Activated T-helper 2 cell treated with anti-CD3 and anti-CD28 coated beads, Interferon-gamma antibody, Interleukin-2, Interleukin-4, amounts not matched to agents 10 μg/mL and 5 μg/mL and 100 μg/mL, durations not matched to agents 14 hours and 24 hours and 36 hours (primary cell): ENCODE measurements at regions of chr10 and their contacts with region 1.

Region 1: DNA sequence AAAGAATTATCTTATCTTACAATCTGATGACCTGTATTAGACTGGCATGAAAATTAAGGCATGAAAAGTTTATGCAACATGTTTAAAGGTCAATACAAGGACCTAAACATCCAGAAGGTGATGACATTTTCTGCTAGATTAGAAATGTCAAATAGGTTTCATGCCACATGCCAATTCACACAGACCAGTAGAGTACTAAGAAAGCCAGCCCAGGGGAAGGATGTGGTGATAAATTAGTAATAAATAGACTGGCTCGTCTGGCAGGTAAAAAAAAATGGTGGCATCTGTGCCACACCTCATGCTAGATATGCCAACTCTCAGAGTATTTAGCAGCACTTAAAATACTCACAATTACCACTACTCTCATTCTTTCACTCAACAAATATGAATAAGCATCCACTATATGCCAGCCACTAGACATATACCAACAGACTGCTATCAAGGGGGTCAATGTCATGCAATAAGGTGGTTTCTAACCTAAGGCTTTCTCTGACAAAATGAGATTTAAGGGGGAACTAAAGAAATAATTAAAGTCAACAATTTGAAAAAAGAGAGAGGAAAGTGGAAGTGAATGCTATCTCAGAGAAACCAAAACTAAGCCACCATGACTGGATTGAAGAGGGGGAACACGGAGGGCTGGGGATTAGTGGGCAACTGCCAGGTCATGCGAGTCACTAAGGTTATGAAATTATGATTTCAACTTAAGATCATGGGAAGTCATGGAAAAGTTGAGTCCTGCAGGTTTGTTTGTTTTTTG is 83.5 kb downstream of the SGMS1 start:
- DNase-seq: no peak
- H3K4me3 Mint-ChIP-seq: peak overlapping the region; percentile 9
- H3K27ac Mint-ChIP-seq: peak overlapping the region; percentile 83
- H3K4me1 Mint-ChIP-seq: peaks cover 72% of the 10 kb centered on the region
- H3K27me3 Mint-ChIP-seq: no peaks in the 10 kb centered on the region

Region 2: GRCh38 chr10:50431791-50432190 is 108.5 kb before region 1 on chr10:
- intact Hi-C with region 1: loop called (anchors 1 kb)
- DNase-seq: no peak
- H3K4me3 Mint-ChIP-seq: peak overlapping the region; percentile 37
- H3K27ac Mint-ChIP-seq: peak overlapping the region; percentile 76
- H3K4me1 Mint-ChIP-seq: peaks cover 34% of the 10 kb centered on the region
- H3K27me3 Mint-ChIP-seq: peaks cover 8% of the 10 kb centered on the region

Region 3: GRCh38 chr10:50497757-50498156 is 42.5 kb before region 1 on chr10:
- intact Hi-C with region 1: loop called (anchors 1 kb)
- DNase-seq: no peak
- H3K4me3 Mint-ChIP-seq: no peak overlapping the region
- H3K27ac Mint-ChIP-seq: peak overlapping the region; percentile 69
- H3K4me1 Mint-ChIP-seq: peaks cover 51% of the 10 kb centered on the region
- H3K27me3 Mint-ChIP-seq: no peaks in the 10 kb centered on the region

Region 4: GRCh38 chr10:50527442-50528043 is 12.7 kb before region 1 on chr10:
- intact Hi-C with region 1: loop called (anchors 1 kb)
- DNase-seq: no peak
- H3K4me3 Mint-ChIP-seq: no peak overlapping the region
- H3K27ac Mint-ChIP-seq: no peak overlapping the region
- H3K4me1 Mint-ChIP-seq: peaks cover 14% of the 10 kb centered on the region
- H3K27me3 Mint-ChIP-seq: peaks cover 2% of the 10 kb centered on the region

Region 5: DNA sequence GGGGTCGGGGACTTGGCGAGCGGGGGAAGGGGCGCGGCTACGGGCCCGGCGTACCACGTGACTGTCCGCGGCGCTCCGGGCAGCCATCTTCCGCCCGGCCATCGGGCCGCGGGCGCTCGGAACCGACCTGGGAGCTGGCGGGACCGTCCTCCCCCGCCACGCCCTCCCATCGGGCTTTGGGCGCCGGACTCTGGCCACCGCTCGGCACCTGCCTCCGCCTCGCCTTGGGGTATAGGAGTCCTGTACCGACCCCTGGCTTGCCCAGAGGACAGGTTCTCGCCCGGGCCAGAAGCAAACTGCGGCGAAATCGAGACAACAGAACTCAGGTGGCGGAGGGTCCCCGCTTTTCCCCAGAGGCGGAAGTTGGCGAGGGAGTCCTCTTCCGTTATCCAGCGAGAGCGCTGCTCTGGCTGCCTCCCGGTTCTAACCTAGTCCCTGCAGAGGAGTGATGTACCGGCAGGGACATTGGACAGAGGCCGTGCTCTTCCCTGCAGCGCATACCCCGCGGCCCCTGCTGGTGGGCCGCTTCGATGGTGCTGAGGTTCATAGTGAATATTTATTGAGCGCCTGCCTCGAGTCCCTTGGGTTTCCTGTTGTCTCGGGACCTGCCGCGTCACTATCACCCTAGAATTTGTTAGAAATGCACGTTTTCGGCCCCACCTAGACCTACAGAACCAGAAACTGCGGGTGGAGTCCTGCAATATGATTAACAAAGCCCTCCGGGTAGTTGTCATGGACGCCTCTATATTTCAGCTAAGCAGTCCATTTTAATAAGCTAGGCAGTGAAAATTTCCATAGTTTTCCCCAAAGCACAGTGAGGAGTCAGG is 84.8 kb after region 1 on chr10:
- intact Hi-C with region 1: loop called (anchors 1 kb)
- DNase-seq: peak; percentile 50
- H3K4me3 Mint-ChIP-seq: peak overlapping the region; percentile 83
- H3K27ac Mint-ChIP-seq: peak overlapping the region; percentile 77
- H3K4me1 Mint-ChIP-seq: peaks cover 36% of the 10 kb centered on the region
- H3K27me3 Mint-ChIP-seq: peaks cover 25% of the 10 kb centered on the region

Region 6: GRCh38 chr10:50653142-50653541 is 112.9 kb after region 1 on chr10:
- intact Hi-C with region 1: no loop called
- DNase-seq: no peak
- H3K4me3 Mint-ChIP-seq: no peak overlapping the region
- H3K27ac Mint-ChIP-seq: no peak overlapping the region
- H3K4me1 Mint-ChIP-seq: peaks cover 15% of the 10 kb centered on the region
- H3K27me3 Mint-ChIP-seq: peaks cover 36% of the 10 kb centered on the region